ENCODE measurements at regions of chr6 and their contacts with region 1.

Region 1: GRCh38 chr6:118952683-118953082 is 17.7 kb upstream of the MCM9 start:
- DNase-seq: no peak
- H3K4me3 ChIP-seq: no peak overlapping the region
- H3K27ac ChIP-seq: no peak overlapping the region
- H3K4me1 ChIP-seq: no peaks in the 10 kb centered on the region
- H3K27me3 ChIP-seq: no peaks in the 10 kb centered on the region
- CTCF ChIP-seq: no peak

Region 2: DNA sequence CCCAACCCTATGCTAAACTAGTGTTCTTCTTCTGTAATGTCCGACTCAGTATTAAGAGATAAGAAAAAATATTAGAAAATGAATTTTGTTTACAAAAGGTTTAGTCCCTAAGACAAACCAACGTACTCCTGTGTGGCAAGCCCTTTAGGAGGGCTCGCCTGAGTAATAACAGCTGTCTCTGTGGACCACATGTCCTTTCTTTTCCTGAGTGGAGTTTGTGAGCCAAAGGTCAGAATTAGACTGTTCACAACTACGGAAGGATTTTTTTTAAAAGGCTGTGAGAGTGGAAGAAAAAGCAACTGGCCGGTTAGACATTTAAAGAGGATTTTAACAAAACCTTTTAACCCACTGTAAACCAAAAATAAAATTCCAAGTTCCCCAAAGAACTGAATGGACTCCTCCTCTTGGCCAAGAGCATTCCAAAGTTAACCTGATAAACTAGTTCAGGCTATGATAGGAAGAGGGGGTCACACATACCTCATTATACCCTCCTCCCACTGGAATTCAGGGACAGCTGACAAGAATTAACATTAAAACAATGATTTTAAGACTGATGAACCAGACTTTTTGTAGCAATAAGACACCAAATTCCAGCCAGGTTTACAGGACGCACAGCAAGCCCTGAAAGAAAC is 82.3 kb after region 1 on chr6:
- CTCF ChIA-PET with region 1: no interaction called
- POLR2A ChIA-PET with region 1: no interaction called
- intact Hi-C with region 1: no loop called
- DNase-seq: no peak
- H3K4me3 ChIP-seq: no peak overlapping the region
- H3K27ac ChIP-seq: no peak overlapping the region
- H3K4me1 ChIP-seq: no peaks in the 10 kb centered on the region
- H3K27me3 ChIP-seq: no peaks in the 10 kb centered on the region
- CTCF ChIP-seq: no peak

Region 3: GRCh38 chr6:119339941-119340456 is 387.3 kb after region 1 on chr6:
- CTCF ChIA-PET with region 1: no interaction called
- POLR2A ChIA-PET with region 1: interaction called, 10 read pairs
- intact Hi-C with region 1: no loop called
- DNase-seq: no peak
- H3K4me3 ChIP-seq: no peak overlapping the region
- H3K27ac ChIP-seq: no peak overlapping the region
- H3K4me1 ChIP-seq: no peaks in the 10 kb centered on the region
- H3K27me3 ChIP-seq: no peaks in the 10 kb centered on the region
- CTCF ChIP-seq: no peak